Dendritic cell treated with granulocyte-macrophage colony-stimulating factor and Interleukin-4, amounts not matched to agents 40 ng/mL and 50 ng/mL, for 4 days (primary cell): ENCODE measurements at regions of chr2 and their contacts with region 1.

Region 1: DNA sequence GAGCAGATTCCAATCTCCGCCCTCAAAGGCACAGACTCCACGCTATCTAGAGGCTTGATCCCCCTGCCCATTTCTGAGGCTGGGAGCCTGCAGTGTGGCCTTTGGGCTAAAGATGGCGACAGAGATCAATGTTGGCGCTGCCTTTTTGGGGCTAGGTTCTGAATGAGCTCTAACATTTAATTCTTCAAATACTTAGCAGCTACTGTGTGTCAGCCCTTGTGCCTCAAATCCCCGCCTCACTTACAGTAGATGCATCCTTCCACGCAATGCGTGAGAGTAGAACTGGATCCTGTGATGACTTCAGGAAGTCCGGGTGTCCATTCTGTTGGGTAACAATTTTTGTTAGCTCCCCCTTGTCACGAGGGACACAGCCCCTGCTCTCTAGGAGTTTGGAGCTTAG is 12.4 kb downstream of the IL1F10 start:
- H3K4me3 Mint-ChIP-seq: no peak overlapping the region
- H3K27ac Mint-ChIP-seq: no peak overlapping the region
- H3K4me1 Mint-ChIP-seq: peaks cover 77% of the 10 kb centered on the region
- H3K27me3 Mint-ChIP-seq: peaks cover 4% of the 10 kb centered on the region

Region 2: GRCh38 chr2:113098041-113098440 is 17.9 kb after region 1 on chr2:
- intact Hi-C with region 1: no loop called
- H3K4me3 Mint-ChIP-seq: peak overlapping the region; percentile 30
- H3K27ac Mint-ChIP-seq: peak overlapping the region; percentile 87
- H3K4me1 Mint-ChIP-seq: peaks cover 64% of the 10 kb centered on the region
- H3K27me3 Mint-ChIP-seq: no peaks in the 10 kb centered on the region

Region 3: GRCh38 chr2:113198790-113199612 is 118.9 kb after region 1 on chr2:
- intact Hi-C with region 1: loop called (anchors 1 kb)
- H3K4me3 Mint-ChIP-seq: peak overlapping the region; percentile 79
- H3K27ac Mint-ChIP-seq: peak overlapping the region; percentile 53
- H3K4me1 Mint-ChIP-seq: peaks cover 25% of the 10 kb centered on the region
- H3K27me3 Mint-ChIP-seq: no peaks in the 10 kb centered on the region